ENCODE measurements at regions of chr11 and their contacts with region 1.

Region 1: DNA sequence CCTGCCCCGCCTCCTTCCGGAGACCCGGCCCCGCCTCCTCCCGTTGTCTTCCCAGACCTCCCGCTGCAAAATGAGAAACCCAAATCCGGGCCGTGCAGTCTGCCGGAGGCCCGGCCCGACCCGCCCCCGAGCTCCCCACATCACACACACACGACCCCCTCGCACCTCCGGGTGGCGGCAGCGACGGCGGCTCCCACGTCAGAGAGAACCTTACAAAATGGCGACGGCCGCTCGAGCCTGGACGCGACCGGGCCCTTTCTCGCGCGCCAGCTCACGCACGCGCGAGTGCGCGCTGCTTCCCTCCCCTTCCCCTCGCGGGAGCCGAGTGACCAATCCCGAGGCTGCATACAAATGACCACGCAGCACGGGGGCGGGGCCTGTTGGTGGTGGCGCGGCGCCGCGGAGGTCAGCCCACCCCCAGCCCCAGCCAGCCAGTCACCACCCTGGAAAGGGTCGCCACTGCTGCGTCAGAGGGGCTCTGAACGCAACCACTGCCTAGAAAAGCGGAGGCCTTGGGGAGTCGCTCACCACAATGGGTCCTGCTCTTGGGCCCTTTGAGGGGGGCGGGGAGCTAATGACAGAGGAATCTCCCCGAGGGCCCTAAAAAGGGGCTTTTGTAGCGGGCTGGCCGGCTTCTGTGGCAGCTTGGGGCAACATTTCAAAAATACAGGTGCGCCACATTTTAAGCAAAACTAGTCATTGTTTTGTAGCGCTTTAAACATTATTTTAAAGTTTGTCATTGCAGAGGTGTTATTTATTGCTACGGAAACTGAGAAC is at the start of gene RBM4B:
- DNase-seq: peak; percentile 89 to 99
- H3K4me3 ChIP-seq: peak within 1 kb of the TSS; percentile 79 to 87
- H3K27ac ChIP-seq: peak within 1 kb of the TSS; percentile 94 to 97
- H3K4me1 ChIP-seq: peaks cover 0 to 29% of the 10 kb centered on the region in 2 donors
- H3K27me3 ChIP-seq: no peaks in the 10 kb centered on the region
- CTCF ChIP-seq: no peak
- total RNA-seq, gene RBM4B: 87.0 TPM

Region 2: GRCh38 chr11:66438504-66439466 is 239.0 kb before region 1 on chr11 and contains the start of gene MRPL11:
- intact Hi-C with region 1: loop called (anchors 2 kb)
- DNase-seq: peak; percentile 53 to 93
- H3K4me3 ChIP-seq: peak within 1 kb of the TSS; percentile 59 to 82
- H3K27ac ChIP-seq: peak within 1 kb of the TSS; percentile 58 to 74
- H3K4me1 ChIP-seq: peaks cover 3 to 4% of the 10 kb centered on the region in 2 donors
- H3K27me3 ChIP-seq: no peaks in the 10 kb centered on the region
- CTCF ChIP-seq: peak; percentile 58 to 78 (median 61)
- total RNA-seq, gene MRPL11: 96.2 TPM

Region 3: GRCh38 chr11:66579017-66579606 is 98.7 kb before region 1 on chr11:
- intact Hi-C with region 1: loop called (anchors 1 kb)
- DNase-seq: peak; percentile 25 to 88
- H3K4me3 ChIP-seq: peak overlapping the region in 1 of 2 donors; percentile 26
- H3K27ac ChIP-seq: no peak overlapping the region
- H3K4me1 ChIP-seq: no peaks in the 10 kb centered on the region
- H3K27me3 ChIP-seq: no peaks in the 10 kb centered on the region
- CTCF ChIP-seq: peak; percentile 85 to 92 (median 92)

Region 4: DNA sequence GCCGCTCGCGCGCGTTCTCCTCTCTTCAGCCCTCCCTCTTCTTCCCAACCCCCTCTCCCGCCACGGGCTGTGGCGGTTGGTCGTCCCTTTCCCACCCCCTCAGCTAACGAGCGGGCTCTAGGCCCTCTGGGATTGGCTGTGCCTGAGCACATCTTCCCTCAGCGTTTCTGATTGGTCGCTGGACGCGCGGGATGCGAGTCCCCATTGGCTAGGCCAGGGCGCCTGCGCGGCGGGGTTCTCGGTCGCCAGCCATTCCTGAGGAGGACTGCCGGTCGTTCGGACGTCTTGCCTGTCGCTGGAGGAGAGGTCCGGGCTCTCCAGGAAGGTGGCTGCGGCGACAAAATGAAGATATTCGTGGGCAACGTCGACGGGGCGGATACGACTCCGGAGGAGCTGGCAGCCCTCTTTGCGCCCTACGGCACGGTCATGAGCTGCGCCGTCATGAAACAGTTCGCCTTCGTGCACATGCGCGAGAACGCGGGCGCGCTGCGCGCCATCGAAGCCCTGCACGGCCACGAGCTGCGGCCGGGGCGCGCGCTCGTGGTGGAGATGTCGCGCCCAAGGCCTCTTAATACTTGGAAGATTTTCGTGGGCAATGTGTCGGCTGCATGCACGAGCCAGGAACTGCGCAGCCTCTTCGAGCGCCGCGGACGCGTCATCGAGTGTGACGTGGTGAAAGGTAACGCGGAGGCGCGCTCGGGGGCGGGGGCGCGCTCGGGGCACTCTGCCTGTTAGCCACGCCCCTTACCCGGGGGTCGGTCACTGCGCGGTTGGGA is 61.2 kb before region 1 on chr11 and contains the start of gene RBM14:
- intact Hi-C with region 1: loop called (anchors 1 kb)
- DNase-seq: peak; percentile 96 to 99
- H3K4me3 ChIP-seq: peak within 1 kb of the TSS; percentile 63 to 85
- H3K27ac ChIP-seq: peak within 1 kb of the TSS; percentile 92 to 95
- H3K4me1 ChIP-seq: peaks cover 6 to 30% of the 10 kb centered on the region in 2 donors
- H3K27me3 ChIP-seq: no peaks in the 10 kb centered on the region
- CTCF ChIP-seq: no peak
- total RNA-seq, gene RBM14: 39.2 TPM

Region 5: GRCh38 chr11:66744485-66745340 is 66.9 kb after region 1 on chr11:
- intact Hi-C with region 1: loop called (anchors 2 kb)
- DNase-seq: peak; percentile 27 to 86
- H3K4me3 ChIP-seq: peak overlapping the region; percentile 94 to 96
- H3K27ac ChIP-seq: peak overlapping the region; percentile 76 to 77
- H3K4me1 ChIP-seq: peaks cover 3 to 14% of the 10 kb centered on the region in 2 donors
- H3K27me3 ChIP-seq: no peaks in the 10 kb centered on the region
- CTCF ChIP-seq: no peak

Measured in ascending aorta (tissue), 2 donors.